Caco-2 (cell line): ENCODE measurements at regions of chr6 and their contacts with region 1.

Region 1: GRCh38 chr6:36094753-36095496 is 35.4 kb upstream of the MAPK13 start:
- DNase-seq: peak; percentile 74 to 83
- H3K4me3 ChIP-seq: no peak overlapping the region
- H3K4me3 Mint-ChIP-seq: peak overlapping the region; percentile 61
- H3K27ac Mint-ChIP-seq: peak overlapping the region; percentile 85
- H3K4me1 ChIP-seq: peaks cover 29% of the 10 kb centered on the region
- H3K4me1 Mint-ChIP-seq: peaks cover 29% of the 10 kb centered on the region
- H3K27me3 ChIP-seq: no peaks in the 10 kb centered on the region
- H3K27me3 Mint-ChIP-seq: no peaks in the 10 kb centered on the region
- CTCF ChIP-seq: peak; percentile 91 to 92

Region 2: DNA sequence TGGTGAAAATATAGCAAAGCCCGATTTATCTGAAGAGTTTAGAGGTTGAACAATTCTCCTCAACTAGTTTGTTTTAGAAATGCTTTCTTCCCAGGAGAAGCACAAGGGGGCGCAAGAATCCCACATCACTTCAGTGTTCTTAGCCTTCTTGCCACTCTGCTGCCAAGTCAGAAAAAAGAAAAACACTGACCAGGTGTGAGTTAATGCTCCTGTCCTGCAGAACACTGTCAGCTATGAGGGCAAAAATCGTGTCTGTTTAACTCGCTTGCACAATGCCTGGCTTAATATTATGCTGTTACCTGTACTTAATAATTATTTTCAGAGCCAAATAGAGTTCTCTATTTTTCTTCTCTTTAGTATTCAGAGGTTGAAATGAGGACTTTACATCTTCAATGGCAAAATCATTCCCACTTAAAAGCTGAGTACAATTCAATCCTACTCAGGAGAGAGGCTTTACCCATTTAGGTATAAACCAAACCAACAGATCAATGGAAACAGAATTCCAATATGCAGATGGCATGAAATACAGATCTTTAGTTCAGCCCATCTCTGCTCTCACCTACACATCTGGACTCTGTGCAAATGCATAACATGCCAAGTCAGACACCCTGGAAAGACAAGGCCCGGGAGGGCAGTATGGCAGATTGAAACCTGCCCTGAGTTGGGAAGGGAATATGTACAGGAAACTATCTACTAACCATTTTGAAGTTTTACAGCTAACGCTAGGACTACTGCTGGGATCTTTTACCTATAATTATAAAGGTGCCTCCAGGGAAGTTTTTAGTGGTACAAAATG is 510.8 kb before region 1 on chr6:
- CTCF ChIA-PET with region 1: no interaction called
- POLR2A ChIA-PET with region 1: no interaction called
- intact Hi-C with region 1: loop called (anchors 10 kb)
- DNase-seq: peak; percentile 54 to 75
- H3K4me3 ChIP-seq: no peak overlapping the region
- H3K4me3 Mint-ChIP-seq: no peak overlapping the region
- H3K27ac Mint-ChIP-seq: no peak overlapping the region
- H3K4me1 ChIP-seq: no peaks in the 10 kb centered on the region
- H3K4me1 Mint-ChIP-seq: no peaks in the 10 kb centered on the region
- H3K27me3 ChIP-seq: no peaks in the 10 kb centered on the region
- H3K27me3 Mint-ChIP-seq: no peaks in the 10 kb centered on the region
- CTCF ChIP-seq: peak; percentile 72 to 88

Region 3: GRCh38 chr6:35960187-35960586 is 134.7 kb before region 1 on chr6:
- CTCF ChIA-PET with region 1: no interaction called
- POLR2A ChIA-PET with region 1: no interaction called
- intact Hi-C with region 1: loop called (anchors 5 kb)
- DNase-seq: no peak
- H3K4me3 ChIP-seq: no peak overlapping the region
- H3K4me3 Mint-ChIP-seq: no peak overlapping the region
- H3K27ac Mint-ChIP-seq: no peak overlapping the region
- H3K4me1 ChIP-seq: peaks cover 49% of the 10 kb centered on the region
- H3K4me1 Mint-ChIP-seq: peaks cover 33% of the 10 kb centered on the region
- H3K27me3 ChIP-seq: no peaks in the 10 kb centered on the region
- H3K27me3 Mint-ChIP-seq: no peaks in the 10 kb centered on the region
- CTCF ChIP-seq: no peak

Region 4: GRCh38 chr6:36075656-36076055 is 19.3 kb before region 1 on chr6:
- CTCF ChIA-PET with region 1: no interaction called
- POLR2A ChIA-PET with region 1: no interaction called
- intact Hi-C with region 1: loop called (anchors 1 kb)
- DNase-seq: peak; percentile 49 to 61
- H3K4me3 ChIP-seq: no peak overlapping the region
- H3K4me3 Mint-ChIP-seq: no peak overlapping the region
- H3K27ac Mint-ChIP-seq: no peak overlapping the region
- H3K4me1 ChIP-seq: no peaks in the 10 kb centered on the region
- H3K4me1 Mint-ChIP-seq: peaks cover 10% of the 10 kb centered on the region
- H3K27me3 ChIP-seq: no peaks in the 10 kb centered on the region
- H3K27me3 Mint-ChIP-seq: no peaks in the 10 kb centered on the region
- CTCF ChIP-seq: peak; percentile 39 to 71